Transverse colon (tissue), 4 donors: ENCODE measurements at regions of chr1 and their contacts with region 1.

Region 1: GRCh38 chr1:100866041-100866900 is 28.4 kb downstream of the EXTL2 start:
- DNase-seq: no peak
- H3K4me3 ChIP-seq: no peak overlapping the region
- H3K27ac ChIP-seq: no peak overlapping the region
- H3K4me1 ChIP-seq: no peaks in the 10 kb centered on the region
- H3K27me3 ChIP-seq: no peaks in the 10 kb centered on the region
- CTCF ChIP-seq: peak; percentile 34 to 52 (median 39)
- EP300 ChIP-seq: no peak
- POLR2A ChIP-seq: no peak

Region 2: DNA sequence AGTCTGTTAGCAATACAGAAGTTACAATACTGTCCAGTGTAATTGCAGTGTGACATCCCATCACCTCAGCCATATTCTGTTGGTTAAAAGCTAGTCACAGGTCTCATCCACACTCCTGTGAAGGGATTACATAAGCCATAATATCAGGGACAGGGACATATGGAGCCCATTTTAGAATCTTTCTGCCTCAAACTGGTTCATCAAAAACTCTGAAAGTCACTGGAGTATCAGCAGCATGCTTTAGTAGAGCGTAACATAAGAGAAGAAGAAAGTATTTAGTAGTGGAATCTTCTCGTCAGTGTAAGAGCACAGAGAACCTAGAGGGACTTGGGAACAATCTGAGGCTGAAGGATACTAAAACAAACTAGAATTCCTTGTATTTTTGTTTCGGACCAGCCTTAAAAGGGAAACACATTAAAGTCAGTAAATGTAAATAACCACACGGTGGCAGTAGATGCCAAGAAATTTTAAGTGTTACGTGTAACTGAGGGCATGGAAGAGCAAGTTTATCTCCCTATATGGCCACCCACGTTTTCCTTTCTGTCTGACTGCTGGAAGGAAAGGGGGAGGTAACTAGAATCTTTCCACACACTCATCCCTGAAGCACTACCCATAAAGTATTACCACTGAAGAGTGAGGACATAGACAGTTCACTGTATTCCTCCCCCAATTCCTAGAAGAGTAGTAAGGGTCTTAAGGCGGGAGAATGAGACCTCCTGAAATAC is 1057.7 kb before region 1 on chr1:
- in situ Hi-C with region 1: loop called (anchors 5 to 25 kb)
- intact Hi-C with region 1: no loop called
- DNase-seq: peak; percentile 11
- H3K4me3 ChIP-seq: no peak overlapping the region
- H3K27ac ChIP-seq: peak overlapping the region; percentile 50 to 77 (median 66)
- H3K4me1 ChIP-seq: peaks cover 0 to 9% (median 0%) of the 10 kb centered on the region in 4 donors
- H3K27me3 ChIP-seq: no peaks in the 10 kb centered on the region
- CTCF ChIP-seq: peak; percentile 63 to 75 (median 69)
- EP300 ChIP-seq: no peak
- POLR2A ChIP-seq: no peak

Region 3: DNA sequence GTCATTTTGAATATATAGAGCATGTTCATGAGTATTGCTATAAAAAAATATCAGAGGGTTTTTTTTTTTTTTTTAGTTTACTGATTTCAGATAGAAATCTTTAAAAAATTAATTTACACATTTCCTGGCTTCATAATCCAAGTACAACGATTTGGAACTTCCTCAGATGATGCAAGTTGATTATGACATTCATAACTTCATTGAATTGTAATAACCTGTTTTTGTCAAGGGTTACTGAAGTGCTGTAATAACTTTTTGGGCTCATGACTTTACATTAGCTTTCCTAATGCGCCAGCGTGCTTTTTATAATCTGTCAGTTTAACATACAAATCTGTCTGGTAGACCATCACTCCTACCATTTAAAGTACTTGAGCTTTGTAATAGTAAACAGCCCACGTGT is 814.9 kb before region 1 on chr1:
- in situ Hi-C with region 1: no loop called
- intact Hi-C with region 1: no loop called
- DNase-seq: no peak
- H3K4me3 ChIP-seq: no peak overlapping the region
- H3K27ac ChIP-seq: no peak overlapping the region
- H3K4me1 ChIP-seq: peaks cover 0 to 19% (median 7%) of the 10 kb centered on the region in 4 donors
- H3K27me3 ChIP-seq: no peaks in the 10 kb centered on the region
- CTCF ChIP-seq: no peak
- EP300 ChIP-seq: no peak
- POLR2A ChIP-seq: no peak

Region 4: DNA sequence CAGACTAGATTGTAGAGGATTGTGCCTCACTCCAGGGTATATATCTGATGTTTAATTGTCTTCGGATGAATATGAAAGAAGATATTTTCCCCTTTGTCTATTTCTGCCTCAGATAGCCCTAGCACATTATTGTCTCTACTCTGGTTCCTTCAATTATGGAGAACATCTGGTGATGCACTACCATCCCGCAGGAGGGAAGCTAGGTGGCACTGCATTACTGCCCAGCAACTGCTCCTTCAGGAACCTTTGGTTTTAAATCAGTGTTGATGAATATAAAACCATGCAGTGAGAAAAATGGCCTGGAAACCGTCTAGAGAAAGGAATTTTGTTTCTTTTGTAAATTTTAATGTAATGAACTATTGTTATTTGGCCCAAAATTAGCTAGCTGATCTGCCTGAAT is 259.8 kb before region 1 on chr1:
- in situ Hi-C with region 1: loop called (anchors 10 to 25 kb)
- intact Hi-C with region 1: loop called (anchors 10 kb)
- DNase-seq: peak; percentile 17
- H3K4me3 ChIP-seq: no peak overlapping the region
- H3K27ac ChIP-seq: no peak overlapping the region
- H3K4me1 ChIP-seq: no peaks in the 10 kb centered on the region
- H3K27me3 ChIP-seq: no peaks in the 10 kb centered on the region
- CTCF ChIP-seq: peak; percentile 24 to 48 (median 39)
- EP300 ChIP-seq: no peak
- POLR2A ChIP-seq: no peak

Region 5: DNA sequence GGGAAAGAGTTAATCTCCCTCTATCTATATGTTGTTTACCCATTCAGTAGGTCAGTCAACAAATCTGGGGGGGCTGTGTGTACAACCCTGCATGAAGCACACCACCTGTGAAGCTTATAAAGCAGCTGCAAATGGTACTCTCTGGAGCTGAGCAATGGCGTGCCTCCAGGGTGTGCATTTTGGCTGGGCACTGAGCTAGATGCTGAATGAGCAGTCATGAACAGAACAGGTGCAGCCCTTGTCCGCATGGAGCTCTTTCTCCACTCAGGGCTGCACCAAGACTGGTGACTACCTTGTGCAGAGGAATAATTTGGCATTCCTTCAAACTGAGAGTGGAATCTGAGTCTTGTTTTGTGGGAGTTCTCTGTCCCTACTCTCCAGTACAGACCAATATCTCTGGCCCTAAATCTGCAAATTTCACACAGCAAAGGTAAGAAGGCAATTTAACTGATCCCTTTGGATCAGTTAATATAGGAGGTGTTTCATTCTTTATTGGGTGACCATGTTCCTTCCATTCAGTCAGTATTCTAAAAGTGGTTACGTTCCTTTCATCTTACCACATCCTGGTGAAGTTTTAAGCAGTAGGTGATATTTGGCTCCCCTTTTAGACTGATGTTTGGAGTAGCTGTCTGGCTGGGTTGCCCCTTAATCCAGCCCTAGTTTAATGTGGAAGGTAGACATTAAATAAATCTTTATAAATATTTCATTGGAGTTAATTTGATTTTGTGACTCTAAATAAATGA is 252.3 kb before region 1 on chr1:
- in situ Hi-C with region 1: loop called (anchors 10 to 25 kb)
- intact Hi-C with region 1: loop called (anchors 10 kb)
- DNase-seq: no peak
- H3K4me3 ChIP-seq: no peak overlapping the region
- H3K27ac ChIP-seq: no peak overlapping the region
- H3K4me1 ChIP-seq: no peaks in the 10 kb centered on the region
- H3K27me3 ChIP-seq: no peaks in the 10 kb centered on the region
- CTCF ChIP-seq: no peak
- EP300 ChIP-seq: no peak
- POLR2A ChIP-seq: no peak